CD4-positive, alpha-beta T cell (primary cell): ENCODE measurements at regions of chr2 and their contacts with region 1.

Region 1: DNA sequence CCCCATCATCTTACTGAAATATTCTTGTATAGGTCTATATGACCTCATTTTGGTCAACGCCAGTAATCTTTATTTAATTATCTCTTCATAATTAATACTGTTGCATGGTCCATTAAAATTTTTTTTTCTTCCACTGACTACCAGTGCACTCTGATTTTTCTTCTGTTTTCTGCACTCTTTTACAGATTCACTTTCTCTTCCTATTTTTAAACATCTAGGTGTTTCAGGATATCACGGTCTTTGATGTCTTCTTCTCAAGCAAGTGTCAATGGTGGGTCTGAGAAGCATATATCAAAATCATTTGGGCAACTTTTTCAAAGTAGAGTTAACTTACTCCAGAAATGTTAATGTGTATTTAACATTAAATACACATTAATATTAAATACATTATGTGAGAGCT is 51.4 kb downstream of the CCDC141 start:
- DNase-seq: no peak
- ATAC-seq: no peak
- H3K4me3 ChIP-seq: no peak overlapping the region
- H3K4me3 Mint-ChIP-seq: no peak overlapping the region
- H3K27ac ChIP-seq: no peak overlapping the region
- H3K27ac Mint-ChIP-seq: no peak overlapping the region
- H3K4me1 ChIP-seq: no peaks in the 10 kb centered on the region
- H3K4me1 Mint-ChIP-seq: peaks cover 10% of the 10 kb centered on the region
- H3K27me3 ChIP-seq: no peaks in the 10 kb centered on the region
- H3K27me3 Mint-ChIP-seq: no peaks in the 10 kb centered on the region
- CTCF ChIP-seq: no peak

Region 2: DNA sequence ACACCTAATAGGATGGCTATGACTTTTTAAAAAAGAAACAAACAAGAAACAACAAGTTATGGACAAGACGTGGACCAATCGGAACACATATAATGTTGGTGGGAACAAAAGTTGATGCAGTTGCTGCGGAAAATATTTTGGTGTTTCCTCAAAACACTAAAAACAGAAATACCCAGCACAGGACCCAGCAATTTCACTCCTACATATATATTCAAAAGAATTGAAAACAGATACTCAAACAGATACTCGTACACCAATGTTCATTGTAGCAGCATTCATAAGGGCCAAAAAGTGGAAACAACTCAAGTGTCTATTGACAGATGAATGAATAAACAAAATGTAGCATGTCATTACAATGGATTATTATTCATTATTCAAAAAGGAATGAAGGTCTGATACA is 39.3 kb after region 1 on chr2:
- CTCF ChIA-PET with region 1: no interaction called
- POLR2A ChIA-PET with region 1: no interaction called
- intact Hi-C with region 1: loop called in 1 of 2 experiments (anchors 5 kb)
- DNase-seq: no peak
- ATAC-seq: no peak
- H3K4me3 ChIP-seq: no peak overlapping the region
- H3K4me3 Mint-ChIP-seq: no peak overlapping the region
- H3K27ac ChIP-seq: no peak overlapping the region
- H3K27ac Mint-ChIP-seq: no peak overlapping the region
- H3K4me1 ChIP-seq: no peaks in the 10 kb centered on the region
- H3K4me1 Mint-ChIP-seq: peaks cover 60% of the 10 kb centered on the region
- H3K27me3 ChIP-seq: no peaks in the 10 kb centered on the region
- H3K27me3 Mint-ChIP-seq: no peaks in the 10 kb centered on the region
- CTCF ChIP-seq: no peak